GM12878 (cell line): ENCODE measurements at regions of chr5 and their contacts with region 1.

Region 1: DNA sequence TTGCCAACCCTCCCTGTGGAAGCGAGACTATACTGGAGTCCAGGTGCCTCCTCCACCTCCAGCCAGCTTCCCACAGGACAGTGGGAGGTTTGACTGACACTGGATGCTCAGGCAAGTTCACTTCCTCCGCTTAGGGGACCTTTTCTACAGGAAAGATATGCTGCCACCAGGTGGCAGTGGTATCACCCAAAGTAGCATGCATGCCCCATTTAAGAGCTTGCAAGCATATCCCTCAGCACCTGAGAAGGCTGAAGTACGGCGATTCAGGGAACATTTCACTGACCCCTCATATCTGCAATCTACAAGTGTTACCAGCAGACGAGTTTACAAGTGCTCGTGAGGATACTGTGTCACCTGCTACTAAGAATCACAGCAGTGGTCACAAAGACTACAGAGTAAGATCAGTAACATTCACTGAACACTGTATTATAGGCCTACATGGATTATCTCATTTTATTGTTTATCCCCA is 75.5 kb downstream of the KLHL3 start:
- DNase-seq: peak; percentile 40
- ATAC-seq: peak; percentile 100
- H3K4me3 ChIP-seq: no peak overlapping the region
- H3K27ac ChIP-seq: no peak overlapping the region
- H3K4me1 ChIP-seq: no peaks in the 10 kb centered on the region
- H3K27me3 ChIP-seq: no peaks in the 10 kb centered on the region
- CTCF ChIP-seq: peak; percentile 76 to 84 (median 83)
- EP300 ChIP-seq: no peak
- POLR2A ChIP-seq: no peak
- RAD21 ChIP-seq: peak; percentile 85

Region 2: GRCh38 chr5:137635521-137635921 is 24.9 kb before region 1 on chr5:
- CTCF ChIA-PET with region 1: interaction called, 31 read pairs
- POLR2A ChIA-PET with region 1: no interaction called
- RAD21 ChIA-PET with region 1: interaction called, 18 read pairs
- SMC1A ChIA-PET with region 1: interaction called, 5 read pairs
- in situ Hi-C with region 1: no loop called
- intact Hi-C with region 1: no loop called
- DNase-seq: no peak
- ATAC-seq: no peak
- H3K4me3 ChIP-seq: no peak overlapping the region
- H3K27ac ChIP-seq: no peak overlapping the region
- H3K4me1 ChIP-seq: no peaks in the 10 kb centered on the region
- H3K27me3 ChIP-seq: no peaks in the 10 kb centered on the region
- CTCF ChIP-seq: no peak
- EP300 ChIP-seq: no peak
- POLR2A ChIP-seq: no peak
- RAD21 ChIP-seq: no peak

Region 3: DNA sequence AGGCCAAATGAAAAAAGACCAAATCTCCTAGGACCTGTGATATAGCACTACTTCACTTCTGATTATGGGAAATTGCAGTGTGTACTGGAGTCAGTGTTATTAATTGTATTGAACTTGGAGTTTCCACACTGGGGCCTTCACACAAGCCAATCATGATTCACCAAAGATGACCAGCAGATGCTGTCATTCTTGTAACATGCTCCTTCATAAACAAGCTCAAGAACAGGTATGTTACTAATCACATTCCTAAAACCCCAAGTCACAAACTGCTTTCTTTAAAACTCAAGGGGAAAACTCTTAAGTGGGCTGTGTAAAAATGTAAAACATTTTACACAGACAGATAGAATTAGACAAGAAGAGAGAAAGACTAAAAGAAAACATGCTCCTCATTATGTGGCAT is 70.0 kb after region 1 on chr5:
- CTCF ChIA-PET with region 1: interaction called, 619 read pairs
- POLR2A ChIA-PET with region 1: no interaction called
- RAD21 ChIA-PET with region 1: interaction called, 28 read pairs
- SMC1A ChIA-PET with region 1: interaction called, 56 read pairs
- in situ Hi-C with region 1: loop called (anchors 5 kb)
- intact Hi-C with region 1: no loop called
- DNase-seq: no peak
- ATAC-seq: no peak
- H3K4me3 ChIP-seq: no peak overlapping the region; the same call in 1 of the 2 replicates
- H3K27ac ChIP-seq: no peak overlapping the region
- H3K4me1 ChIP-seq: no peaks in the 10 kb centered on the region; the same call in 1 of the 2 replicates
- H3K27me3 ChIP-seq: no peaks in the 10 kb centered on the region
- CTCF ChIP-seq: no peak
- EP300 ChIP-seq: no peak
- POLR2A ChIP-seq: no peak
- RAD21 ChIP-seq: no peak

Region 4: GRCh38 chr5:137743031-137743640 is 82.8 kb after region 1 on chr5:
- CTCF ChIA-PET with region 1: interaction called, 619 read pairs
- POLR2A ChIA-PET with region 1: interaction called, 33 read pairs
- RAD21 ChIA-PET with region 1: interaction called, 168 read pairs
- SMC1A ChIA-PET with region 1: interaction called, 155 read pairs
- in situ Hi-C with region 1: loop called (anchors 5 kb)
- intact Hi-C with region 1: loop called (anchors 1 kb)
- DNase-seq: no peak
- ATAC-seq: peak; percentile 84
- H3K4me3 ChIP-seq: no peak overlapping the region
- H3K27ac ChIP-seq: no peak overlapping the region
- H3K4me1 ChIP-seq: no peaks in the 10 kb centered on the region; the same call in 1 of the 2 replicates
- H3K27me3 ChIP-seq: no peaks in the 10 kb centered on the region
- CTCF ChIP-seq: peak; percentile 59 to 79 (median 69)
- EP300 ChIP-seq: no peak
- POLR2A ChIP-seq: no peak
- RAD21 ChIP-seq: peak; percentile 82

Region 5: DNA sequence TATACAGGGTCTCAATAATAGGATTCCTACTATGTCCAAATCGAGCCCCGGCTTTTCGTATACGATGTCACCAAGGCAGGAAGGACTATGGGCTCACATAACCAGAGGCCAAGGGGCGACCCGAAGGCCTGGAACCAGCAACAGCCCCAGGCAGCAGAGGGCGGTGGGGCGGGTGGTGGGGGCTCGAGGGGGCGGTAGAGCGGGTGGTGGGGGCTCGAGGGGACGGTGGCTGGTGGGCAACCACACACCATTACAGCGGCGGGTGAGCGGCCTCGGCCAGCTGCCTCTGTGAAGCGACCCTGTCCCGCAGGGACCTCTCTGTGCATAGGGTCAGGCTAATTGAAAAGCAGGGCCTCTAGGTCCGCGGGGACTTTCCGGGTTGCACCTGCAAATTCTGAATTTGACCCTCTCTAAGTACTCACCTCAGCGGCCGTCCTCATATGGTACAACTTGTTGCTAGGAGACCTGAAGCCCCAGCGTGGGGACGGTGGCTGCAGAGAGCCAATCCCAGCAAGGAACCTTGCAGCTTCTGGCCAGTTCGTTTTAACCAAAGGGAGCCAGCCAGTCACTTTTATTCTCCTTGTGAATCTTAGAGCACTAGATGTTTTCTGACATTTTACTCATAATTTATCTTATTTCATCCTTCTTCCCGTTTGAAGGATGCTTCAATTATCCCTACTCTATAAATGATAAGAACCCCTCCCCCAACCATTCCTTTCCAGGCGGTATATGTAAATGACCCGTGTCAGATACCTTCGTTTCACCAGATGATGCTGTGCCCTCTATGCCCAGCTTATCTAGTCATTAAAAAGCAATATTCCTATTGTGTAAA is 478.8 kb after region 1 on chr5 and contains the start of gene NME5:
- CTCF ChIA-PET with region 1: no interaction called
- POLR2A ChIA-PET with region 1: no interaction called
- RAD21 ChIA-PET with region 1: no interaction called
- SMC1A ChIA-PET with region 1: no interaction called
- in situ Hi-C with region 1: loop called (anchors 10 kb)
- intact Hi-C with region 1: no loop called
- DNase-seq: peak; percentile 5
- ATAC-seq: peak; percentile 96
- H3K4me3 ChIP-seq: peak within 1 kb of the TSS; percentile 71
- H3K27ac ChIP-seq: no peak within 1 kb of the TSS
- H3K4me1 ChIP-seq: no peaks in the 10 kb centered on the region
- H3K27me3 ChIP-seq: no peaks in the 10 kb centered on the region
- CTCF ChIP-seq: no peak
- EP300 ChIP-seq: no peak
- POLR2A ChIP-seq: no peak
- RAD21 ChIP-seq: no peak
- polyA plus RNA-seq, gene NME5: 0.22 TPM in 1 of 2 experiments, not detected in the other